ENCODE measurements at regions of chr2 and their contacts with region 1.

Region 1: DNA sequence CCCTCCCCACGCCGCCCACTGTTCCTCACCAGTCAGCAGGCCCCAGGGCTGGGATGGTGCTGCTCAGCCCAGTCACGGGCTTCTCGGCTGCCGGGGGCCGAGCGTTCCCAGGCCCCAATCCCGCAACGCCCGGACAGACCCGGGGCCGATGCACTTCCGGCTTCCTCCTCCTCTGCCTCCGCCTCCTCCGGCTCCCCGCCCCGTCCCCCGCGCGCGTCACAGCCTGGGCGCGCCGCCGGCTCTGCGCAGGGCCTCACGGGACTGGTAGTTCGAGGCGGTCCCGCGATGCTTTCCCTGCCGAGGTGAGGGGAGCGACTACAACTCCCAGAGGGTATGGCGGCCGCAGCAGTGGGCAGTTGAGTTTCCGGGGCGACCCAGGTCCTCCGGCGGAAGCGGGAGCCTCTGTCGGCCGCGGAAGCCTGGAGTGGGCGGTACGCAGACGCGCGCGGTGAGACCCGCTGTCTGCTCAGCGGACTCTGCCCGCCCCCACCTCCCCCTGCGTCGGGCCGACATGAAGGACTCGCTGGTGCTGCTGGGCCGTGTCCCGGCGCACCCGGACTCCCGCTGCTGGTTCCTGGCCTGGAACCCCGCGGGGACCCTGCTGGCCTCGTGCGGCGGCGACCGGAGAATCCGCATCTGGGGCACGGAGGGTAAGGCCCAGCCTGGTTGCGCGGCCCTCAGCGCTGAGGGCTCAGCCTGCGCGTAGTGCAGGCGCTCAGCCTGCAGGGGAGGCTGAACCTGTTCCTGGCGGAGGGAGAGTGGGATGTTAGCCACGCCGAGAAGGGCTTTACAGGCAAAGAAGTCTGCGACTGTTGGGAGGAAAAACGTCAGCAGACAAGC is at the starts of genes CIAO1 and TMEM127:
- DNase-seq: peak; percentile 99
- H3K4me3 ChIP-seq: peak within 1 kb of the TSS; percentile 88 to 97 (median 92)
- H3K27ac ChIP-seq: peak within 1 kb of the TSS; percentile 92 to 98 (median 95)
- H3K4me1 ChIP-seq: peaks cover 41 to 59% (median 54%) of the 10 kb centered on the region in 4 donors
- H3K27me3 ChIP-seq: no peaks in the 10 kb centered on the region
- CTCF ChIP-seq: peak; percentile 10 to 40 (median 11)
- EP300 ChIP-seq: no peak
- POLR2A ChIP-seq: peak; percentile 90
- total RNA-seq, gene CIAO1: 76.4 to 101 (median 92.5) TPM
- total RNA-seq, gene TMEM127: 42.8 to 72.0 (median 55.3) TPM

Region 2: DNA sequence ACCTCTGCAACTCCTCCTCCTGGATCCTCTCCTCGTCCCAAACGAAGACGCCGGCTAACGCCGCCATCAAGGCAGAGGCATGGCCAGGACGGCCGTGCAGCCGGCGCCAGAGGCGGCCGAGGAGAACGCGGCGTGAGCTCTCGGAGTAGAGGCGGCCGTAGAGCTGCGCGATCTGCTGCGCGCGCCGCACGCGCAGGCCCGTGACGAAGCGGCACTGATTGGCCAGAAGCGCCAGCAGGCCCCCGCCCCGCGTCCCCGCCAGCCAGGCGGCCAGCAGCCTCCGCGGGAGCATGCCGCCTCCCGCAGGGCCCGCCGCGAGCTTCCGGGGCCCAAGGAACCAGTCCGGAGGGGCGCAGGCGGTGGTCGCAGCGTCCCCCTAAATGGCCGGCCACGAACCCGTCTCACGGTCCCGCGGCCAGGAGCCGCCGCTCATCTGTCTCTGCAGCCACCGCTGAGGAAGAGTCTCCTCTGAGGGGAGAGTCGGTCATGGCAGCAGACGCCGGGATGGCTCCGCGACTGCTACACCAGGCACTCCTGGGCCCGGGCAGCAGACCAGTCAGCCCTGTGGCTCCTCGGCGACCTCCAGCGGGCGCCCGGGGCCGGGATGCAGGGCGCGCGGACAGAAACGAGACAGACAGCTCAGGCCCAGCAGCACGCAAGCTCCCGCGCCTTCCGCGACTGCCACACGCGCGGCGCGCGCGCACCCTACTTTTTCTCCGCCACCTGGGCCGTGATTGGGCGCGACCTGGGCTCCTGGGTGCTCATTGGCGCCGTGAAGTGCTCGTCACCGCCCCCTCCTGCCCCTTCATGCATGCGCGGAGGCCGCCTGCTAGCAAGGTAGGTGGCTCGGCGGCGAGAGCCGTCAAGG is 57.7 kb before region 1 on chr2 and contains the start of gene STARD7:
- intact Hi-C with region 1: loop called (anchors 2 kb)
- DNase-seq: peak; percentile 100
- H3K4me3 ChIP-seq: peak within 1 kb of the TSS; percentile 83 to 98 (median 94)
- H3K27ac ChIP-seq: peak within 1 kb of the TSS; percentile 92 to 99 (median 96)
- H3K4me1 ChIP-seq: peaks cover 34 to 57% (median 54%) of the 10 kb centered on the region in 4 donors
- H3K27me3 ChIP-seq: no peaks in the 10 kb centered on the region
- CTCF ChIP-seq: peak in 2 of 3 experiments; percentile 9 to 13
- EP300 ChIP-seq: no peak
- POLR2A ChIP-seq: peak; percentile 89
- total RNA-seq, gene STARD7: 85.0 to 110 (median 92.2) TPM

Region 3: GRCh38 chr2:96305091-96305978 is 39.3 kb after region 1 on chr2 and contains the start of gene SNRNP200:
- intact Hi-C with region 1: loop called (anchors 5 kb)
- DNase-seq: peak; percentile 96
- H3K4me3 ChIP-seq: peak within 1 kb of the TSS; percentile 75 to 94 (median 84)
- H3K27ac ChIP-seq: peak within 1 kb of the TSS; percentile 79 to 86 (median 82)
- H3K4me1 ChIP-seq: peaks cover 21 to 41% (median 33%) of the 10 kb centered on the region in 4 donors
- H3K27me3 ChIP-seq: no peaks in the 10 kb centered on the region
- CTCF ChIP-seq: no peak
- EP300 ChIP-seq: no peak
- POLR2A ChIP-seq: peak; percentile 84
- total RNA-seq, gene SNRNP200: 73.7 to 106 (median 90.8) TPM

Region 4: DNA sequence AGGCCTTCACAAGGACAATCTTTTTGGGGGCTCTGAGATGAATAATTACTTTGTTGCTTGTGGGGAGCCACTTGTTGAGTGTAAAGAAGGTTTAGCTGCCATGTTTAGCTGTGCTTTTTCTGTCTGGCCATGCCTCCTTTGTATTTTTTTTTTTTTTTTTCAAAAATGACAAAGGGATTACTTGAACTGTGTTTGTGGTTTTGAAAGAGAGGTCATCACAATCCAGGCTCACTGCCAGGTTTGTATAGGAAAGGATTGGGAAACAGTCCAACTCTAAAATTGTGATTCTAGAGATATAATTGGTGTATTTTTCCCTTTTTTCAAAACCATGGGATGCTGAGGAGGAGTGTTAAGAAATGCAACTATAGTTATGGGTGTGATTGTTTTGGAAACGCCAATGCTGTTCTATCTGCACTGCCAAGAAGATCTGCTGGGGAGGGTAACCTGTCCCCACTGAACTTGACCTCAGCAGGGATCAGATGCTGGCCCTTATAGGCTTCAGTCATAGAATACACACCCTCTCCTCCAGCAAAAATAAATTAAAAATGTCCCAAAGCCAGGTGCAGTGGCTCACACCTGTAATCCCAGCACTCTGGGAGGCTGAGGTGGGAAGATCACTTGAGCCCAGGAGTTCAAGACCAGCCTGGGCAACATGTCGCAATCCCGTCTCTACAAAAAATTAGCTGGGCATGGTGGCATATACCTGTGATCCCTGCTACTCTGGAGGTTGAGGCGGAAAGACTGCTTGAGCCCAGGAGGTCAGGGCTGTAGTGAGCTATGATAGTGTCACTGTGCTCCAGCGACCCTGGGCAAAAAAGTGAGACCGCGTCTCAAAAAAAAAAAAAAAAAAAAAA is 63.6 kb after region 1 on chr2:
- intact Hi-C with region 1: loop called (anchors 10 kb)
- DNase-seq: no peak
- H3K4me3 ChIP-seq: no peak overlapping the region
- H3K27ac ChIP-seq: no peak overlapping the region
- H3K4me1 ChIP-seq: peaks cover 14 to 18% (median 16%) of the 10 kb centered on the region in 4 donors
- H3K27me3 ChIP-seq: peaks cover 3 to 23% (median 14%) of the 10 kb centered on the region in 4 donors
- CTCF ChIP-seq: no peak
- EP300 ChIP-seq: no peak
- POLR2A ChIP-seq: no peak